ENCODE measurements at regions of chr12 and their contacts with region 1.

Region 1: GRCh38 chr12:120100435-120101029 is 16.0 kb downstream of the RAB35 start:
- DNase-seq: no peak
- ATAC-seq: no peak
- H3K4me3 ChIP-seq: no peak overlapping the region
- H3K27ac ChIP-seq: no peak overlapping the region
- H3K4me1 ChIP-seq: no peaks in the 10 kb centered on the region
- H3K27me3 ChIP-seq: no peaks in the 10 kb centered on the region
- CTCF ChIP-seq: no peak

Region 2: DNA sequence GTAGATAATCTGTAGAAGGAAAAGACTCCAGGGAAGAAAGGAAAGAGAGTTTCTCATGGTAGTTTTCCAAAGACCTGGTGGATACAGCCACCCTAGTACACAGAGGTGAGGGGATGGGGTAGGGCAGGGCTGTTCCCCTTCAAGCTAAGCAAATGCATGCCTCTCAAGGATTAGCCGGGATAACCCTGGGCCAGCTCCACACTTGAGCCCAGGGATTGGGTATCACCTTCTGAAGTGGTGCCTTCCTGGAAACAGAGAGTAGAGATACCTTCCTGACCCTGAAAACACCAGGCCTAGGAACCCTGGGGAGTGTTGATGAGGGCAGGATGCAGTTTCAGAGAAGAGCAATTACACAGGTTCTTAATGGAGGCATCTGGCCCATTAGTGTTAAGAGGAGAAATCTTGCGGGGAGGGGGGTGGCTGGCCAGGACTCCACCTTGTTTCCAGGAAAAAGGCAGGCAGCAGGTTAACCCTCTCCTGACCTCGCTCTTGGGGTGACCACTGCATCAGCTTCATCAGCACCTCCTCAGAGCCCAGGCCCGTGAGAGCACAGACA is 613.9 kb before region 1 on chr12:
- CTCF ChIA-PET with region 1: no interaction called
- POLR2A ChIA-PET with region 1: interaction called, 10 read pairs
- in situ Hi-C with region 1: no loop called
- intact Hi-C with region 1: no loop called
- DNase-seq: no peak
- ATAC-seq: no peak
- H3K4me3 ChIP-seq: no peak overlapping the region
- H3K27ac ChIP-seq: no peak overlapping the region
- H3K4me1 ChIP-seq: no peaks in the 10 kb centered on the region
- H3K27me3 ChIP-seq: no peaks in the 10 kb centered on the region
- CTCF ChIP-seq: no peak

Region 3: DNA sequence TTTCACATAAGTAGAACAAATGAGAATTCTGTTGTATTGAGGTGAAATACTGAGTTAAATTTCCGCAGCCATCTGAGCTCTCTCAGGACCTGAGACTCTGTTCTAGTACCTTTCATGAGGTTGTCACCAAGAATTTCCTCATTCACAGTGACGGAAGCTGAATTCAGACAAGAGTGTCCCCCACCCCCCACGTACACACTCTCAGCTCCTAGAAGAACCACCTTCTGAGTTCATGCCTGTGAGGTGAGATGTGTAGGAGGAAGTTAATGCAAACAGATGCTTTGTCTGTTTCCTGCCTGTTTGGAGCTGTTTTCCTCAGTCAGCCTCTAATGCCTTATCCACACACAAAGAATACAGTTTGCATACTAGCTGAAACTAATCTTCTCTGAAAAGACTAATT is 93.3 kb before region 1 on chr12:
- CTCF ChIA-PET with region 1: interaction called, 10 read pairs
- POLR2A ChIA-PET with region 1: no interaction called
- in situ Hi-C with region 1: no loop called
- intact Hi-C with region 1: no loop called
- DNase-seq: no peak
- ATAC-seq: no peak
- H3K4me3 ChIP-seq: no peak overlapping the region
- H3K27ac ChIP-seq: no peak overlapping the region
- H3K4me1 ChIP-seq: peaks cover 5% of the 10 kb centered on the region
- H3K27me3 ChIP-seq: no peaks in the 10 kb centered on the region
- CTCF ChIP-seq: no peak

Measured in Panc1 (cell line).